ENCODE measurements at regions of chr10 and their contacts with region 1.

Region 1: GRCh38 chr10:28241741-28242399 is 61.0 kb downstream of the MPP7 start:
- DNase-seq: peak; percentile 63
- H3K4me3 Mint-ChIP-seq: no peak overlapping the region
- H3K27ac Mint-ChIP-seq: no peak overlapping the region
- H3K4me1 Mint-ChIP-seq: peaks cover 36% of the 10 kb centered on the region
- H3K27me3 Mint-ChIP-seq: no peaks in the 10 kb centered on the region

Region 2: GRCh38 chr10:27369880-27370279 is 872.0 kb before region 1 on chr10:
- CTCF ChIA-PET with region 1: no interaction called
- intact Hi-C with region 1: loop called (anchors 5 kb)
- DNase-seq: no peak
- H3K4me3 Mint-ChIP-seq: no peak overlapping the region
- H3K27ac Mint-ChIP-seq: no peak overlapping the region
- H3K4me1 Mint-ChIP-seq: peaks cover 12% of the 10 kb centered on the region
- H3K27me3 Mint-ChIP-seq: no peaks in the 10 kb centered on the region

Region 3: GRCh38 chr10:27558612-27559020 is 683.3 kb before region 1 on chr10:
- CTCF ChIA-PET with region 1: no interaction called
- intact Hi-C with region 1: loop called (anchors 2 kb)
- DNase-seq: peak; percentile 60
- H3K4me3 Mint-ChIP-seq: no peak overlapping the region
- H3K27ac Mint-ChIP-seq: no peak overlapping the region
- H3K4me1 Mint-ChIP-seq: no peaks in the 10 kb centered on the region
- H3K27me3 Mint-ChIP-seq: no peaks in the 10 kb centered on the region

Region 4: DNA sequence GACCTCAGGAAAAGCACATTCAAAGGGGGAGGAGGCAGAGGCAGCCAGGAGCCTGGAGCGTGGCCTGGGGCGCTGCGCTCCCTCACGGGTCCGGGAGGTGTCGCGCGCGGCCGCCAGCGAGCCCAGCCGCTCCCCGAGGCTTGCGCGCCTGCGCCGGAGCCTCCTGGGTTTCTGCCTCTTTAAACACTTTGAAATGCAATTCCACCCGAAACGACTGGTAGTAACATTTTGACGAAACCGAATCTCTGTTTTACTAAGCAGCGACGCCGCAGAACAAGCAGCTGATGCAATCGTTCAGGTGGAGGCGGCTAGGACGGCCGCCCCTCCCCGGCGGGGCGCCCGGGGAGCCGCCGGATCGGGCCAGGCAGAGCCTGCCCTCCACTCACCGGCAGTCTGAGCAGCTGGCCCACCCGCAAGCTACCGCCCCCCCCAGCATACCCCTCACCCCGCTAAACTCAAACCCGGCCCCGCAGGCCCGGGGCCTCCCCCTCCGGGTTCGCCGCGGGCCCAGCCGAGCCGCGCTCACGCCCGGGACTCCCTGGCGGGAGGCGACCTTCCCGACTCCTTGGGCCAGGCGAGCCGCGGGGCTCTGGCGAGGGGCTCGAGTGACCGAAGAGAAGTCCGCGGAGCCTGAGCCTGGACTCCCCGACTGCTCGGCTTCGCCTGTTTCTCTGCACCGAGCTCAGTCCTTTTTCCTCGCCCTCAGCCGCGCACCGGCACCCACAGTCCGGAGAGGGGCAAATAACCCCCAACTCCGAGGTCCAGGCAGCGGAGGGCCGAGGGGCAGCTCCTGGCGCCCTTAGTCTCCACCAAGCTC is 499.5 kb before region 1 on chr10:
- CTCF ChIA-PET with region 1: interaction called, 14 read pairs
- intact Hi-C with region 1: loop called (anchors 1 kb)
- DNase-seq: peak; percentile 88
- H3K4me3 Mint-ChIP-seq: peak overlapping the region; percentile 68
- H3K27ac Mint-ChIP-seq: no peak overlapping the region
- H3K4me1 Mint-ChIP-seq: peaks cover 31% of the 10 kb centered on the region
- H3K27me3 Mint-ChIP-seq: peaks cover 49% of the 10 kb centered on the region

Region 5: DNA sequence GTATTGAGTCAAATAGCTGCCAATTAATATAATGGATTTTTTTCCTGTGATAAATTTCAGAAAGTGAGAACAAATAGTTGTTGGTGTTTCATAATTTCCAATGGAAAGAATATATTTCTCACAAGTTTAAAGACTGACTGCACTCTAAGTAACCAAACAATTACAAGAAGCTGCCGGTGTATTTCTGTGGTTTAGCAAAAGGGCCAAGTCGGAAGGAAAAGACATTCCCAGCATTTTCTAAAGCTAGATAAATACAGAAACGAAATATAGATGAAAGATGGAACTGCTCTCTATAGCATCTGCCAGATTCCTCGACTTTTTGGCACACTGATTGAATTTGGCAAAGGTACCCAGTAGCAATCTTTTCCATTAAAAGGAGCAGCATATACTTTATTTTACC is 403.5 kb before region 1 on chr10:
- CTCF ChIA-PET with region 1: no interaction called
- intact Hi-C with region 1: no loop called
- DNase-seq: no peak
- H3K4me3 Mint-ChIP-seq: no peak overlapping the region
- H3K27ac Mint-ChIP-seq: no peak overlapping the region
- H3K4me1 Mint-ChIP-seq: no peaks in the 10 kb centered on the region
- H3K27me3 Mint-ChIP-seq: peaks cover 6% of the 10 kb centered on the region

Region 6: GRCh38 chr10:27998254-27999004 is 243.4 kb before region 1 on chr10:
- CTCF ChIA-PET with region 1: no interaction called
- intact Hi-C with region 1: loop called (anchors 5 kb)
- DNase-seq: peak; percentile 21
- H3K4me3 Mint-ChIP-seq: peak overlapping the region; percentile 82
- H3K27ac Mint-ChIP-seq: no peak overlapping the region
- H3K4me1 Mint-ChIP-seq: peaks cover 10% of the 10 kb centered on the region
- H3K27me3 Mint-ChIP-seq: peaks cover 31% of the 10 kb centered on the region

Region 7: GRCh38 chr10:28217848-28218247 is 24.0 kb before region 1 on chr10:
- CTCF ChIA-PET with region 1: interaction called, 6 read pairs
- intact Hi-C with region 1: loop called (anchors 2 kb)
- DNase-seq: peak; percentile 45
- H3K4me3 Mint-ChIP-seq: no peak overlapping the region
- H3K27ac Mint-ChIP-seq: no peak overlapping the region
- H3K4me1 Mint-ChIP-seq: peaks cover 48% of the 10 kb centered on the region
- H3K27me3 Mint-ChIP-seq: no peaks in the 10 kb centered on the region

Region 8: DNA sequence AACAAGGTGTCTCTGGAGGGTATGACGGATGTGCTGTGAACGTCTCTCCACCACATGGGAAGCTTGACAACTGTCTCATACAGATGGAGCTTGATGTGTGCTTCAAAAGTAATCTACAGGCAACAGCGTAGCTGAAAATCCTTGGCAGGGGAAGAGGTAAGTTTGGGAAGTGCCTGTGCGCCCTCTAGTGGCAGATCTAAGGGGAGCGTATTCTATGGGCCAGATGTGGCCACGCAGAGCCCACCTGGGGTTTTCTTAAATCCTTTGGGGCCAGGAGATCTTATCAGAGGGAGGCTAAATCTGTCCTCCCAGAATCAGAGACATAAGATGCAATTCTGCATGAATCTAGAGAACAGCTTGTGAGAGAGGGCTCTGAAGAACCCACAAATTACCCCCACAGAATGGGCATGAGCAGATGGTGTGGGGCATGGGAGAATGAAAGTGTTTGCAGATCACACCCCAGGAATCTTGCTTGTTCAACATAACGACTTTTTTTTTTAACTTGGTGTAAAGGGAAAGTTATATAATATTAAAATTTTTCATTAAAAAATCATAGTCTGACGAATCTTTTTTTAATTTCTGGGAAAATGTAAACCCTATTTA is 152.2 kb after region 1 on chr10:
- CTCF ChIA-PET with region 1: interaction called, 99 read pairs
- intact Hi-C with region 1: no loop called
- DNase-seq: peak; percentile 83
- H3K4me3 Mint-ChIP-seq: no peak overlapping the region
- H3K27ac Mint-ChIP-seq: no peak overlapping the region
- H3K4me1 Mint-ChIP-seq: peaks cover 4% of the 10 kb centered on the region
- H3K27me3 Mint-ChIP-seq: no peaks in the 10 kb centered on the region

Region 9: DNA sequence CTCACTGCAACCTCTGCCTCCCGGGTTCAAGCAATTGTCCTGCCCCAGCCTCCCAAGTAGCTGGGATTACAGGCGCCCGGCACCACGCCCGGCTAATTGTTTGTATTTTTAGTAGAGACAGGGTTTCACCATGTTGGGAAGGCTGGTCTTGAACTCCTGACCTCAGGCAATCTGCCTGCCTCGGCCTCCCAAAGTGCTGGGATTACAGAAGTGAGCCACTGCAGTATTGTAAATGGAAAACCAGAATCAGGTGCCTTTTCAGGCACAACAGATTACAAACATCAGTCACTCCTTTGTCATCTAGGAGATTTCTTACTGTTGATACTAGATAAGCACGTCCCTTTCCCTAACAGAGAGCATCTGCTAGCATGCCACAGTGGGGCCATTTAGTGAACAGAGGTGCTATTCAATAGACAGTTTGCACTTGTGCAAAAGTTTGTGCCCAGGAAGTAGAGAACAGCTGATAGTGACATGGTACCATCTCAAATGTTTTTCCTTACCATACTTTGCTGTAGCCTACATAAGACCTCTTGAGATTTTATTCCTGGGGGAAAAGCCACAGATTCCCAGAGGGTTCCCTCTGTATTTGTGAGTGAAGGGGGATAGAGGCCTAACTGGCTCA is 266.5 kb after region 1 on chr10:
- CTCF ChIA-PET with region 1: no interaction called
- intact Hi-C with region 1: no loop called
- DNase-seq: no peak
- H3K4me3 Mint-ChIP-seq: no peak overlapping the region
- H3K27ac Mint-ChIP-seq: no peak overlapping the region
- H3K4me1 Mint-ChIP-seq: no peaks in the 10 kb centered on the region
- H3K27me3 Mint-ChIP-seq: no peaks in the 10 kb centered on the region